Activated B cell treated with CpG ODN at 0.5 μM for 24 hours (primary cell): ENCODE measurements at regions of chr22 and their contacts with region 1.

Region 1: GRCh38 chr22:39532215-39533071 is at the start of gene RPS19BP1:
- DNase-seq: peak; percentile 94
- ATAC-seq: peak; percentile 85
- H3K4me3 Mint-ChIP-seq: peak within 1 kb of the TSS; percentile 96
- H3K27ac Mint-ChIP-seq: peak within 1 kb of the TSS; percentile 94
- H3K4me1 Mint-ChIP-seq: peaks cover 56% of the 10 kb centered on the region
- H3K27me3 Mint-ChIP-seq: no peaks in the 10 kb centered on the region
- CTCF ChIP-seq: no peak
- total RNA-seq, gene RPS19BP1: 67.7 and 79.0 TPM in 2 replicates

Region 2: GRCh38 chr22:38190581-38190980 is 1341.9 kb before region 1 on chr22:
- CTCF ChIA-PET with region 1: no interaction called
- POLR2A ChIA-PET with region 1: interaction called, 10 read pairs
- intact Hi-C with region 1: no loop called
- DNase-seq: no peak
- ATAC-seq: no peak
- H3K4me3 Mint-ChIP-seq: no peak overlapping the region
- H3K27ac Mint-ChIP-seq: no peak overlapping the region
- H3K4me1 Mint-ChIP-seq: peaks cover 3% of the 10 kb centered on the region
- H3K27me3 Mint-ChIP-seq: peaks cover 23% of the 10 kb centered on the region
- CTCF ChIP-seq: no peak

Region 3: GRCh38 chr22:39349506-39349966 is 182.9 kb before region 1 on chr22:
- CTCF ChIA-PET with region 1: interaction called, 9 read pairs
- POLR2A ChIA-PET with region 1: interaction called, 7 read pairs
- intact Hi-C with region 1: loop called (anchors 2 kb)
- DNase-seq: peak; percentile 47
- ATAC-seq: peak; percentile 9
- H3K4me3 Mint-ChIP-seq: peak overlapping the region; percentile 87
- H3K27ac Mint-ChIP-seq: peak overlapping the region; percentile 87
- H3K4me1 Mint-ChIP-seq: peaks cover 40% of the 10 kb centered on the region
- H3K27me3 Mint-ChIP-seq: peaks cover 2% of the 10 kb centered on the region
- CTCF ChIP-seq: no peak

Region 4: GRCh38 chr22:39374191-39374590 is 158.3 kb before region 1 on chr22:
- CTCF ChIA-PET with region 1: no interaction called
- POLR2A ChIA-PET with region 1: no interaction called
- intact Hi-C with region 1: no loop called
- DNase-seq: no peak
- ATAC-seq: no peak
- H3K4me3 Mint-ChIP-seq: no peak overlapping the region
- H3K27ac Mint-ChIP-seq: no peak overlapping the region
- H3K4me1 Mint-ChIP-seq: peaks cover 5% of the 10 kb centered on the region
- H3K27me3 Mint-ChIP-seq: no peaks in the 10 kb centered on the region
- CTCF ChIP-seq: no peak

Region 5: DNA sequence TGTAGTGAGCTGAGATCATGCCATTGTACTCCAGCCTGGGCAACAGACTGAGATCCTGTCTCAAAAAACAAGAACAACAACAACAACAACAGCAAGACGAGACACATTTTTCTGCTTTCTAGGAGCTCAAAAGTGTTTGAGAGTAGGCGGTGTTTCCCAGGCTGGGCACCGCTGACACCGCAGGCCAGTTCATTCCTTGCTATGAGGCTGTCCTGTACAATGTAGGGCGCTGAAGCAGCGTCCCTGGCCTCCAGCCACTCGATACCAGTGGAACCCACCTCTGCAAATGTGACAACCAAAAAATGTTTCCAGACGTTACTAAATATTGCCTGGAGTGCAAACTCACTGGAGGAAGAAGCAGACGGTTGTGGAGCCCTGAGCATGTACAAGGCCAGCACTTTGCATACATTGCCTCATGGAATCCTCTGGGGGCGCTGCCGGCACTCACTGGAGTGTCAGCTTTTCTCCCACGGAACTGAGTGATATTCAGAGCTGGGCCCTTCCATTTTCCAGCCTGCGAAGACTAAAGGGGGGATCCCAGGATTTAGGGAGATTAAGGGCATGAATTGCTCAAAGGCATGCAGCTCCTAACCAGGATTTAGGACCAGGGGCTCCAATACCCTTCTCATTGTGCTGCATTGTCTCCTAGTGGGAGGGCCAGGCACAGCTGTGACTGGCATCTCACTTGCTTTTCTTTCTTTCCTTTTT is 36.2 kb before region 1 on chr22:
- CTCF ChIA-PET with region 1: interaction called, 42 read pairs
- POLR2A ChIA-PET with region 1: interaction called, 12 read pairs
- intact Hi-C with region 1: loop called (anchors 1 kb)
- DNase-seq: peak; percentile 33
- ATAC-seq: peak; percentile 77
- H3K4me3 Mint-ChIP-seq: no peak overlapping the region
- H3K27ac Mint-ChIP-seq: peak overlapping the region; percentile 41
- H3K4me1 Mint-ChIP-seq: peaks cover 16% of the 10 kb centered on the region
- H3K27me3 Mint-ChIP-seq: no peaks in the 10 kb centered on the region
- CTCF ChIP-seq: peak; percentile 51

Region 6: DNA sequence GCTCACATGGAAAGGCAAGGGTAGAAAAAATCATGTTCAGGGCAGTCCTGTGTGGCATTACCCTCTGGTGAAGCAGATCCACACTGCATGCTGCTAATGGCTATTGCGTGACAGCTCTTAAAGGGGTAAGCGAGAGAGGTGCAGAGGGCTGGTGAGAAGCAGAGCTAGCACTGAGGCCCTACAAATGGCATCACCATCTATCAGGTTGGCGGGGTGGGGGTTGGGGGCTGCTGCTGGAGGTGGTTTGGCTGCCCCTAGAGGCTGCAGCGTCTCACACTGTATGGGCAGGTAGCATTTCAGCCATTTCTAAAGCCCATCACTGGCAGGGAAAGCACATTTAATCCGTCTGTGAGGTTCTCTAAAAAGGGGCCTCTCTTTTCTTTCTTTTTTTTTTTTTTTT is 410.9 kb after region 1 on chr22:
- CTCF ChIA-PET with region 1: interaction called, 9 read pairs
- POLR2A ChIA-PET with region 1: no interaction called
- intact Hi-C with region 1: loop called (anchors 2 kb)
- DNase-seq: no peak
- ATAC-seq: no peak
- H3K4me3 Mint-ChIP-seq: no peak overlapping the region
- H3K27ac Mint-ChIP-seq: no peak overlapping the region
- H3K4me1 Mint-ChIP-seq: peaks cover 71% of the 10 kb centered on the region
- H3K27me3 Mint-ChIP-seq: no peaks in the 10 kb centered on the region
- CTCF ChIP-seq: no peak

Region 7: GRCh38 chr22:40177738-40178416 is 645.4 kb after region 1 on chr22 and contains the start of gene TNRC6B:
- CTCF ChIA-PET with region 1: no interaction called
- POLR2A ChIA-PET with region 1: no interaction called
- intact Hi-C with region 1: loop called (anchors 1 kb)
- DNase-seq: peak; percentile 24
- ATAC-seq: peak; percentile 86
- H3K4me3 Mint-ChIP-seq: peak within 1 kb of the TSS; percentile 87
- H3K27ac Mint-ChIP-seq: peak within 1 kb of the TSS; percentile 87
- H3K4me1 Mint-ChIP-seq: peaks cover 60% of the 10 kb centered on the region
- H3K27me3 Mint-ChIP-seq: no peaks in the 10 kb centered on the region
- CTCF ChIP-seq: no peak
- total RNA-seq, gene TNRC6B: 84.6 and 95.2 TPM in 2 replicates